A549 (cell line): ENCODE measurements at regions of chr5 and their contacts with region 1.

Region 1: GRCh38 chr5:175840050-175840841 is 31.1 kb upstream of the CPLX2 start:
- DNase-seq: peak in 1 of 2 experiments; percentile 64
- ATAC-seq: no peak
- H3K4me3 ChIP-seq: no peak overlapping the region
- H3K27ac ChIP-seq: peak overlapping the region; percentile 97 to 99
- H3K4me1 ChIP-seq: peaks cover 64% of the 10 kb centered on the region
- CTCF ChIP-seq: peak; percentile 43; the same call in 2 of the 3 replicates
- EP300 ChIP-seq: no peak
- POLR2A ChIP-seq: no peak
- RAD21 ChIP-seq: peak; percentile 21 to 40; a peak in 1 of 5 replicates

Region 2: DNA sequence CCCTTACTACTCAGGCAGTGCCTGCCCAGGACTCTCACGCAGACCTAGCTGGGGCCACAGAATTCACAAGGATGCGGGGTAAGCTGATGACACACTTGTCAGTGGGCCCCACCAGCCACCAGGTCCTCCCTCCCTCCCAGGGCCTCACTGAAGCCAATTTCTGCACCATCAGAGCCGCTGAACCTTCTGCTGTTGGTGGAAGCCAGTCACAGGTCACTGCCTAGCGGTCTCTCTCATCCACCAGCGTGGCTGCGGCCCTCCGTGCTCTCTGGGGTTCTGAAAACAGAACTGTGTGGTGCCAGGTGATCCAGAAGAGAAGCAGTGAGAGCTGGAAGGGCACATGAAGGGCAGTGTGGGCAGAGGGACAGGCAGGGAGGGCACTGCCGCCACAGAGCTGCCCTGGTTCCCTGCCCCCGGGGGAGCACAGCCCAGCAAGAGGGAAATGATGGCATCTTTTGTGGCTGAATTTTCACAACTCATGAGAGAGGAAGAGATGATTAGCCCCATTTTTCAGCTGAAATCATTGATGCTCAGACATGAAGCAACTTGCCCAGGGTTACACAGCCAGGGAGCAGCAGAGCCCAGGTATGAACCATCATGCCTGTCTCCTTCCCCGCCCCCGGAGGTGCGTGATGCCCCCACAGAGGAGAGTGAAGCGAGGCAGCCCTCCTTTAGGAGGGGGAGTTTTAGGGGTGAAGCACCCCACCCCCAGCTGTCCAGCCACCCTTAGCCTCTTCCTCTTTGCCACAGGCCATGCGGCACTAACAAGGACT is 10.2 kb before region 1 on chr5:
- CTCF ChIA-PET with region 1: interaction called, 12 read pairs
- POLR2A ChIA-PET with region 1: no interaction called
- DNase-seq: no peak
- ATAC-seq: 0 out of 6 replicates have a peak, but pooled peaks of 1 of the 2 experiments have one; percentile 8
- H3K4me3 ChIP-seq: no peak overlapping the region
- H3K27ac ChIP-seq: peak overlapping the region; percentile 51 to 80
- H3K4me1 ChIP-seq: peaks cover 48% of the 10 kb centered on the region
- CTCF ChIP-seq: no peak
- EP300 ChIP-seq: no peak
- POLR2A ChIP-seq: no peak
- RAD21 ChIP-seq: no peak